HEK293 (cell line): ENCODE measurements at regions of chr21 and their contacts with region 1.

Region 1: DNA sequence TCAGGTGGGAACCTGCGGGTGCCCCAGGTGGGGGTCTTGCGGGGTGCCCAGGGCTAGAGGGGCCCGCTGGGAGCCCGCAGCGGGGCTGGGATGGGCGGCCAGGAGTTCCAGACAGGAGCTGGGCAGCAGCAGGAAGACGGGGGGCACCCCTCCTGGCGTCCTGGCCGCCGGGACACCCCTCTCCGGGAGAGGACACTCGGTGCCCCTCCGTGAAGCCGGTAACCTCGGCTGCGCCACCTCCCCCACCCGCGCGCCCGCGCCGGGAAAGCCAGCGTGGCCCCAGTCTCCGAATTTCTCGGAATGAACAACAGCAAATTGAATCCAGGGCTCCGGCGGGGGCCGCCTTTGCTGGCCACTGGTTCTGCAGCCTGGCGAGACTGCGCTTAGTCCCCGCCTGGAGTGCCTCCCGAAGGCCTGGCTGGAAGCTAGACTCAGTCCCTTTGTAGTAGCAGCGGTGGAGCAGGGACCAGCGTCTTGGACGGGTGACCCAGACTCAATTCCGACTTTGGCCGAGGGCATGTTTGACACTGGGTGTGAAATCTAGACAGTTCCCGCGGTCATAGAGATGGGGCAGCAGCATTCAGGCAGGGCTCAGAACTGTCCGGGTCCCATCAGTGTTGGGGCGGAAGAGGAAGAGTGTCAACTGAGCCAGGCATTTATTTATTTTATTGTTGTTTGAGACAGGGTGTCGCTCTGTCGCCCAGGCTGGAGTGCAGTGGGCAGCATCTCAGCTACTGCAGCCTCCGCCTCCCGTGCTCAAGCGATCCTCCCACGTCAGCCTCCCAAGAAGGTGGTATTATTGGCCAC is 769 bp downstream of the IFNGR2 start:
- H3K4me3 ChIP-seq: peak overlapping the region; percentile 68
- H3K27ac ChIP-seq: peak overlapping the region; percentile 77
- H3K4me1 ChIP-seq: peaks cover 7% of the 10 kb centered on the region
- CTCF ChIP-seq: peak; percentile 7; the same call in 1 of the 2 replicates

Region 2: DNA sequence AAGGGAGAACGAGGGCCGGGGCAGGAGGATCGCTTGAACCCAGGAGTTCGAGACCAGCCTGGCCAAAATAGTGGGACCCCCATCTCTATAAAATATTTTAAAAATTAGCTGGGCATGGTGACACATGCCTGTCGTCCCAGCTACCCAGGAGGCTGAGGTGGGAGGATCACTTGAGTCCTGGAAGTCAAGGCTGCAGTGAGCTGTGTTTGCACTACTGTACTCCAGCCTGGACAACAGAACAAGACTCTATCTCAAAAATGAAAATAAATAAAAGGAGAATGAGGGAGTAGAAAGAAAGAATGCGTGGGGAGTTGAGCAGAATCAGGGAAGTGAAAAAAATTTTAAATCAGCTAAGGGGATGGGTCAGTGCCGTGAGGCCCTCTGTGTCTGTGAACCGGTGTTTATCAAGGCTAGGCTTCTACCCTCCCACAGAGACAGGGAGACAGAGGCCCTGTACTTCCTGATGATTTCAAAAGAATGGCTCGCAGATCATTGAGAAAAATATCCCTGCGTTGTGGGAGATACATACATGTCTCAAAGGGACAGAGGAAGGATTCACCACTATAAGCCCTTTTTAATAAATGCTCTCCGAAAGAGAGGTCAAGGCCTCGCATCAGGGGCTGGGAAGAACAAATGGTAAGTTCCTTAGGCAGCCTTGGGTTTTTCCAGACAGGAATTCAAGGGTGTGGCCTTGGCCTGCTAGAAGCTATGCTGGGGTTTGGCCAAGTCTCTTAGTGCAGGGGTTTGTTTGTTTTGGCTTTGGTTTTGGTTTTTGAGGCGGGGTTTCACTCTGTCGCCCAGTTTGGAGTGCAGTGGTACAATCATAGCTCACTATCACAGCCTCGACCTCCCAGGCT is 117.2 kb before region 1 on chr21:
- CTCF ChIA-PET with region 1: no interaction called
- POLR2A ChIA-PET with region 1: no interaction called
- H3K4me3 ChIP-seq: no peak overlapping the region
- H3K27ac ChIP-seq: no peak overlapping the region
- H3K4me1 ChIP-seq: peaks cover 11% of the 10 kb centered on the region
- CTCF ChIP-seq: no peak

Region 3: DNA sequence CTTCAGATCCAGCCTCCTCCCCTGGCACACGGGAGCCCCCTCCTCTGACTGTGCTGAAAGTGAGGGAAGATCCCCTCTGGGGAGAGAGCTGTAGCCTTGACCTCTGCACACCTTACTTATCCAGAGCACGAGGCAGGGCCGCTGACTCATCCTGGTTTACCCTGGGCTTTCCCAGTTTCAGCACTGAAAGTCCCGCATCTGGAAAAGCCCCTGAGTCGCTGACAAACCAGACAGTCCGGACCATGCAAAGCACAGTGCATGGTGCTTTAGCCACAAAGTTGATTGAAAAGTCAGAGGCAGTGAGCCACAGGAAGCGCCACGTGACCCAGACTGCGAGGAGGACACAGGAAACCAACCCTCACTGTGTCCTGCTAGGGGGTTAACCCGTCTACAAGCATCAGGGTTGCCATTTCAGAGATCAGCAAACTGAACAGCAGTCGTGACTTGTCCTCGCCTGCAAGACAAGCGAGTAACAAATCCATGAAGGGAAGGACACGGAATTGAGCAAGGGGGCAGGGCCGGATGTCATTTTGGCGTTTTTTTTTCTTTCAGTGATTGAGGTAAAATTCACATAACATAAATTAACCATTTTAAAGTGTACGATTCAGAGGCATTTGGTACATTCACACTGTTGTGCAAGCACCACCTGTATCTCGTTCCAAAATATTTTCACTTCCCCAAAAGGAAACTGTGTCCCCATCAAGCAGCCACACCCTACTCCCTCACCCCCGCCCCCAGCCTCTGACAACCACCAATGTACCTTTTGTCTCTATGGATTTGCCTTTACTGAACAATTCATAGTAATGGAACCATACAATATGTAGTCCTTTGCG is 20.7 kb before region 1 on chr21:
- CTCF ChIA-PET with region 1: interaction called, 10 read pairs
- POLR2A ChIA-PET with region 1: interaction called, 3 read pairs
- H3K4me3 ChIP-seq: no peak overlapping the region
- H3K27ac ChIP-seq: peak overlapping the region; percentile 29; the same call in 1 of the 2 replicates
- H3K4me1 ChIP-seq: peaks cover 9% of the 10 kb centered on the region
- CTCF ChIP-seq: no peak